A673 (cell line): ENCODE measurements at regions of chr3 and their contacts with region 1.

Region 1: DNA sequence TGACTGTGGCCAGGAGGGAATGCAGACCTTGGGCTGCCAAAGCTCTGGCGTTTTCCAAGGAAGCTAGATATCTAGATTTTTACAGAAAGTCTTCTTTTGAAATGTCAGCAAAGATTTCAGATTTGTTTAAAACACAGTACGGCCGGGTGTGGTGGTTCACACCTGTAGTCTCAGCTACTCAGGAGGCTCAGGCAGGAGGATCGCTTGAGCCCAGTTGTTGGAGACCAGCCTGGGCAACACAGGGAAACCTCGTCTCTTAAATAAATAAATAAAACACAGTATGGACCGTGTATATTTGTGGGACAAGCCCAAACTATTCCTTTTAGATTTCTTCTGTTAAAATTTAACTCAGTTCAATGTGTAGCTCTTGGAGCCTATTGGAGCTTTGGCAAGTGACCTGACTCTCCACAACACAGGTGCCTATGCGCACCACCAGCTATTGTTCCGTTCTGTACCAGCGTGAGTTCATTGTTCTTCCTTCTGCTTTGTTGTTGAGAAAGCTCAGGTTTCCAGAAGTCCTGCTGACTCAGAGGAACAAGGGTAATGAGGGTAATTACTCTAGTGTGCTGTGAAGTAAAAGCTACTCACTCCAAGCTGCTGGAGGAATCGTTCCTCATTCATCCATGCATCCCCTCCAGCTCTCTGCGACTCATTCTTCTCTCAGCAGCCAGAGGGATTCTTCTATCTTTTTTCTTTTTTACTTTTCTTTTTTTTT is 73.1 kb upstream of the SLC6A6 start:
- DNase-seq: peak; percentile 27
- H3K4me3 ChIP-seq: no peak overlapping the region
- H3K27ac ChIP-seq: no peak overlapping the region
- H3K4me1 ChIP-seq: no peaks in the 10 kb centered on the region
- H3K27me3 ChIP-seq: no peaks in the 10 kb centered on the region
- CTCF ChIP-seq: no peak

Region 2: GRCh38 chr3:14216257-14217048 is 112.8 kb before region 1 on chr3:
- CTCF ChIA-PET with region 1: no interaction called
- POLR2A ChIA-PET with region 1: no interaction called
- intact Hi-C with region 1: no loop called
- DNase-seq: peak; percentile 58
- H3K4me3 ChIP-seq: no peak overlapping the region
- H3K27ac ChIP-seq: no peak overlapping the region
- H3K4me1 ChIP-seq: no peaks in the 10 kb centered on the region
- H3K27me3 ChIP-seq: no peaks in the 10 kb centered on the region
- CTCF ChIP-seq: peak; percentile 61

Region 3: DNA sequence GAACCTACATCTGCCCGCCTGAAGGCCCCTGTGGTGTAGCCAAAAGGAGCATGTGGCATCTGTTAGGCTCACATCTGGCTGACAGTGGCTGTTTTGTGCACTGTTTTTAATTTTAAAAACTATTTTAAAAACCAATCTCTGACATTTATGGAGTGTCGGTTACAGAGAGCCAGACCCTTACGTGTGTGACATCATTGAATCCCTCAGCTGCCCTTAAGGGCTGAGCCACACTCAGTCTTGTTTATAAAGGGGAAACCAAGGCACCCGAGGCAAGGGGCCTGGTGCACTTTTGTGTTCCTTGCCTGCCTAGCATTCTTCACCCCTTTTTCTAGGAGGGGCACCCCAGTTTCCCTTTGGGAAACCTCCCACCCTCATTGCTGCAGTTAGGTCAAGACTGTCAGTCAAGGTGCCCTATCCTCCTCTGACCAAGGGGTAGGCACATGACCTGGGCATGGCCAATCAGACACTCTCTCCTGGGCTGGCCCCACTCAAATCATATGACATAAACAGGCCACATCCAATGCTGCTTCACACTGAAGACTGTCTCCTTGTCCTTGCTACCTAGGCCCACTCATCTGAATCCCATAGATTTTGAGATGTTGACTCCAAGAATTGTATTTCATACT is 45.3 kb before region 1 on chr3:
- CTCF ChIA-PET with region 1: no interaction called
- POLR2A ChIA-PET with region 1: no interaction called
- intact Hi-C with region 1: loop called (anchors 1 kb)
- DNase-seq: no peak
- H3K4me3 ChIP-seq: no peak overlapping the region
- H3K27ac ChIP-seq: no peak overlapping the region
- H3K4me1 ChIP-seq: peaks cover 4% of the 10 kb centered on the region
- H3K27me3 ChIP-seq: no peaks in the 10 kb centered on the region
- CTCF ChIP-seq: no peak

Region 4: DNA sequence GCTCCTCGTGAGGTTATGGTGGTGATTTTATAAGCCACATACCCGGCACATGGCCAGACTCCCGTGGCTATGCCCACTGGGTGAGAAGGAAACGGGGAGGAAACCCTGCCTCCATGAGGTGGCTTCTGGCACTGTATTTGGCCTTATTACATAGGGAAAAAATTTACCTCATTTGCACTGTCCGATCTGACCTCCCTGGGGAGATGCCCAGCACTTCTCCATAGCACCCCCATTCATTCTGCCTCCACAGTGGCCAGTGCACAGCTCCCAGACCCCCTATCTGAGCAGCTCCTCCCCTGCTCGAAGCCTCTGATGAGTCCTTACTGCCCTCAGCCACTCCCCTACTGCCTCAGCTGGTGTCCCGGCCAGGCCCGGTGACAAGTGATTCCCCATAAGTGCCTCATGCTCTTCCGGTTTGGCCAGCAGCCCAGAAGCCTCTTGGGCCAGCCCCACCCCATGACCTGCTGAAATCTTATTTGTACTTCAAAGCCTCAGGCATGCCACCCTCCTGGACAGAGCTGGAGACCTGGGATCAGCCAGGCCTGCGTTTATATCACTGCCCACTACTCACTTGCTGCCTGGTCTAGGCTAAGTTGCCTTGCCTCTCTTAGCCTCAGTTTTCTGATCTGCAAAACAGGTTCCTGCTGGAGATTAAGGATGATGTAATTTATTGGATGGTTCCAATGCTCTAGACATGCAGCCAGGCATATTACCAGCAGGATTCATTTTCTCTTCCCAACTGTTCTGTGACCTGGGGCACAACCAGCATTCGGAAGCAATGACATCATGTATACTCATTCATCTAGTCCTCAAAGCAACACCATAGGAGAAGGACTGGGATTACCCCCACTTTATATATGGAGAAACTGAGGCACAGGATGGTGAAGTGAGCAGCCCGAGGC is 42.6 kb after region 1 on chr3:
- CTCF ChIA-PET with region 1: no interaction called
- POLR2A ChIA-PET with region 1: no interaction called
- intact Hi-C with region 1: no loop called
- DNase-seq: peak; percentile 74
- H3K4me3 ChIP-seq: no peak overlapping the region
- H3K27ac ChIP-seq: no peak overlapping the region
- H3K4me1 ChIP-seq: peaks cover 8% of the 10 kb centered on the region
- H3K27me3 ChIP-seq: no peaks in the 10 kb centered on the region
- CTCF ChIP-seq: no peak